ENCODE measurements at regions of chr2 and their contacts with region 1.

Region 1: GRCh38 chr2:38672445-38673391 is 6.8 kb downstream of the GALM start:
- DNase-seq: peak in 1 of 7 donors; percentile 6
- H3K4me3 ChIP-seq: no peak overlapping the region
- H3K27ac ChIP-seq: peak overlapping the region in 1 of 5 donors; percentile 36
- H3K4me1 ChIP-seq: peaks cover 25 to 50% of the 10 kb centered on the region in 2 donors
- H3K27me3 ChIP-seq: no peaks in the 10 kb centered on the region
- CTCF ChIP-seq: no peak
- POLR2A ChIP-seq: no peak

Region 2: GRCh38 chr2:38720613-38721241 is 48.0 kb after region 1 on chr2:
- intact Hi-C with region 1: loop called in 1 of 2 experiments (anchors 5 kb)
- DNase-seq: peak; percentile 90 to 97 (median 94)
- H3K4me3 ChIP-seq: no peak overlapping the region
- H3K27ac ChIP-seq: peak overlapping the region; percentile 6 to 81 (median 56)
- H3K4me1 ChIP-seq: peaks cover 16 to 31% of the 10 kb centered on the region in 2 donors
- H3K27me3 ChIP-seq: no peaks in the 10 kb centered on the region
- CTCF ChIP-seq: no peak
- POLR2A ChIP-seq: peak in 1 of 2 donors; percentile 36

Measured in adrenal gland (tissue), 19 donors.